Right cardiac atrium (tissue), 5 donors: ENCODE measurements at regions of chr12 and their contacts with region 1.

Region 1: DNA sequence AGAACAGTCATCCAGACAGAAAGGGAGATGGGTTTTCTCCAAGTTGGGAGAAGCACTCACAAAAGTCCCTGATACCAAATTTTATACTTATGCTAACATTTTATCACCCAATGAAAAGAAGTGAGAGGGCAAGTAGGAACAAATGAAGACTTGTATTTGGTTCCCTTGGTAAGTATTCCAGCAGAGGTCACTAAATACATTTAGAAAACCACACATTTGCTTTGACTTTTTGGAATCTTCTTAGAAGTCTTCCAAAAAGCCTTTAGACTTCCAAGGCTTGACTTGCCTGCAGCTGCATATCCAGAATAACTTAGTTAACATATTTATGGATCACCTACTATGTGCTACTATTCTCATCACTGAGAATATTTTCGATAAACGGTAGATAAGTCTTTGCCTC is 3.1 kb upstream of the GYS2 start:
- DNase-seq: no peak
- ATAC-seq: no peak
- H3K4me3 ChIP-seq: no peak overlapping the region
- H3K27ac ChIP-seq: no peak overlapping the region
- H3K4me1 ChIP-seq: peaks cover 1% of the 10 kb centered on the region
- H3K27me3 ChIP-seq: no peaks in the 10 kb centered on the region

Region 2: GRCh38 chr12:21539797-21540196 is 67.9 kb before region 1 on chr12:
- intact Hi-C with region 1: no loop called
- DNase-seq: no peak
- ATAC-seq: no peak
- H3K4me3 ChIP-seq: no peak overlapping the region
- H3K27ac ChIP-seq: no peak overlapping the region
- H3K4me1 ChIP-seq: no peaks in the 10 kb centered on the region
- H3K27me3 ChIP-seq: no peaks in the 10 kb centered on the region

Region 3: GRCh38 chr12:21677622-21678277 is 70.0 kb after region 1 on chr12:
- intact Hi-C with region 1: loop called (anchors 2 to 5 kb)
- DNase-seq: no peak
- ATAC-seq: no peak
- H3K4me3 ChIP-seq: no peak overlapping the region
- H3K27ac ChIP-seq: no peak overlapping the region
- H3K4me1 ChIP-seq: no peaks in the 10 kb centered on the region
- H3K27me3 ChIP-seq: no peaks in the 10 kb centered on the region

Region 4: DNA sequence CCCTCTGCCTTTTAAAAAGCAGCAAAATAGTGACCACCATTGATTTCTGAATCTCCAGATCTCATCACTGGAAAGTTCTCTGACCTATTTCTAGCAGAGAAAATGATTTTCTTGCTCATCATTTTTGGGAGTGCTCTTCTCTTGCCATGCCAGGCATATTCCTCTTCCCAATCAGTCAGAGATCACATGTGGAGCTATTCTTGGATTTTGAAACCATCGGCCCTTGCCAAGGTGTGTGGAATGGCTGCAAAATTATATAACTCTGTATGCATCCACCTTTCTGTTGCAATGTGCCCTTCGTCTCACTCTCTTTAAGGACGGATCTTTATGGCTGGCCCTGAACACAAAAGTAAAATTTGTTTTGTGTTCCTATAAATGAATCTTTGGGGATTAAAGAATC is 75.4 kb after region 1 on chr12:
- intact Hi-C with region 1: loop called (anchors 2 to 5 kb)
- DNase-seq: no peak
- ATAC-seq: peak in 1 of 2 donors; percentile 61
- H3K4me3 ChIP-seq: no peak overlapping the region
- H3K27ac ChIP-seq: no peak overlapping the region
- H3K4me1 ChIP-seq: no peaks in the 10 kb centered on the region
- H3K27me3 ChIP-seq: no peaks in the 10 kb centered on the region

Region 5: GRCh38 chr12:21697904-21698630 is 90.4 kb after region 1 on chr12:
- intact Hi-C with region 1: no loop called
- DNase-seq: no peak
- ATAC-seq: no peak
- H3K4me3 ChIP-seq: peak overlapping the region; percentile 43
- H3K27ac ChIP-seq: no peak overlapping the region
- H3K4me1 ChIP-seq: no peaks in the 10 kb centered on the region
- H3K27me3 ChIP-seq: no peaks in the 10 kb centered on the region